Adrenal gland (tissue), 19 donors: ENCODE measurements at regions of chr1 and their contacts with region 1.

Region 1: GRCh38 chr1:171245458-171246064 is 2.7 kb upstream of the FMO1 start:
- DNase-seq: peak; percentile 38 to 60 (median 52)
- H3K4me3 ChIP-seq: no peak overlapping the region
- H3K27ac ChIP-seq: no peak overlapping the region
- H3K4me1 ChIP-seq: no peaks in the 10 kb centered on the region
- H3K27me3 ChIP-seq: no peaks in the 10 kb centered on the region
- CTCF ChIP-seq: peak; percentile 50 to 73 (median 69)
- POLR2A ChIP-seq: no peak

Region 2: GRCh38 chr1:171110621-171111326 is 134.8 kb before region 1 on chr1:
- intact Hi-C with region 1: no loop called
- DNase-seq: no peak
- H3K4me3 ChIP-seq: no peak overlapping the region
- H3K27ac ChIP-seq: peak overlapping the region in 1 of 5 donors; percentile 63
- H3K4me1 ChIP-seq: peaks cover 0 to 5% of the 10 kb centered on the region in 2 donors
- H3K27me3 ChIP-seq: no peaks in the 10 kb centered on the region
- CTCF ChIP-seq: no peak
- POLR2A ChIP-seq: no peak

Region 3: GRCh38 chr1:171173069-171173468 is 72.5 kb before region 1 on chr1:
- intact Hi-C with region 1: no loop called
- DNase-seq: no peak
- H3K4me3 ChIP-seq: no peak overlapping the region
- H3K27ac ChIP-seq: no peak overlapping the region
- H3K4me1 ChIP-seq: no peaks in the 10 kb centered on the region
- H3K27me3 ChIP-seq: no peaks in the 10 kb centered on the region
- CTCF ChIP-seq: no peak
- POLR2A ChIP-seq: no peak

Region 4: GRCh38 chr1:171313835-171314320 is 68.3 kb after region 1 on chr1 and contains the start of gene FMO4:
- intact Hi-C with region 1: loop called (anchors 5 kb)
- DNase-seq: peak; percentile 91 to 99 (median 96)
- H3K4me3 ChIP-seq: peak within 1 kb of the TSS in 2 of 4 donors; percentile 2 to 60
- H3K27ac ChIP-seq: peak within 1 kb of the TSS in 3 of 5 donors; percentile 49 to 66 (median 61)
- H3K4me1 ChIP-seq: peaks cover 6 to 12% of the 10 kb centered on the region in 2 donors
- H3K27me3 ChIP-seq: no peaks in the 10 kb centered on the region
- CTCF ChIP-seq: peak; percentile 72 to 97 (median 90)
- POLR2A ChIP-seq: peak in 1 of 2 donors; percentile 52
- total RNA-seq, gene FMO4: 1.7 to 11.4 (median 3.8) TPM